ENCODE measurements at regions of chr17 and their contacts with region 1.

Region 1: DNA sequence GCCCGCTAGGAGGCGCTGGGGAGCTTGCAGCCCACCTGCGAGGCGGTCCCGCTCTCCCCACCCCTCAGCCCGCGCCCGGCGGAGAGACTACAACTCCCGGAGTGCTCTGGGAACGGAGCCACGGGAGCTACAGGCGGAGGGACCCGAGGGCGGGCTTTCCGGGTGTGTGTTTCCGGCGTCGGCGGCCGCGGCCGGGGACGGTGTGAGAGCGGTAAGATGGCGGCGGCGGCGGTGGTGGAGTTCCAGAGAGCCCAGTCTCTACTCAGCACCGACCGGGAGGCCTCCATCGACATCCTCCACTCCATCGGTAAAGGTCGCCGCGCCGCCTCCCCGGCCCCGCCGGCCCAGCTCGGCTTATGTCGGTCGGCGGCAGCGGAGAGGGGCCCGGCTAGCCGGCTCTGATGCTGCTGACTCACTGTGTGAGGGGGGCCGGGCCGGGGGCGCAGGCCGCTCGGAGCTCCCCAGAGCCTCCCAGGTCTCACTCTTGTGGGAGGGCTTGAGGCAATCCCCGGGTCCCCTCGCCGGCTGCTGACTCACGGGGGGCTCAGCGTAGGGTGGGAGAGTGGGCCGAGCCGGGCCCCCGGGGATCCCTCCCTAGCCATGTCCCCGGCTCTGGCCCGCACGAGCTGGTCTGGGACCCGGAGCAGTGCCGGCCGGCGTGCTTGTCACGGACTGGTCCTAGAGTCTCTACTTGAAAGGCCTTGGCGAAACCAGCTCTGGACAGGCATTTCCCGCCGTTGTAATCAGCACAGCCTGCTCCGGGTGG is at the start of gene PSMD11:
- DNase-seq: peak; percentile 96 to 98 (median 98)
- ATAC-seq: peak; percentile 96
- H3K4me3 ChIP-seq: peak within 1 kb of the TSS; percentile 99
- H3K27ac ChIP-seq: peak within 1 kb of the TSS; percentile 95
- H3K4me1 ChIP-seq: peaks cover 11 to 17% of the 10 kb centered on the region in 2 experiments; a peak in 4 of 5 replicates
- H3K27me3 ChIP-seq: no peaks in the 10 kb centered on the region
- CTCF ChIP-seq: peak in 2 of 3 experiments; percentile 91 to 96; a peak in 3 of 6 replicates
- EP300 ChIP-seq: 0 out of 2 replicates have a peak, but pooled peaks have one; percentile 1
- POLR2A ChIP-seq: peak; percentile 88
- RAD21 ChIP-seq: peak; percentile 22 to 50; a peak in 2 of 4 replicates
- polyA plus RNA-seq, gene PSMD11: 316 to 378 TPM

Region 2: DNA sequence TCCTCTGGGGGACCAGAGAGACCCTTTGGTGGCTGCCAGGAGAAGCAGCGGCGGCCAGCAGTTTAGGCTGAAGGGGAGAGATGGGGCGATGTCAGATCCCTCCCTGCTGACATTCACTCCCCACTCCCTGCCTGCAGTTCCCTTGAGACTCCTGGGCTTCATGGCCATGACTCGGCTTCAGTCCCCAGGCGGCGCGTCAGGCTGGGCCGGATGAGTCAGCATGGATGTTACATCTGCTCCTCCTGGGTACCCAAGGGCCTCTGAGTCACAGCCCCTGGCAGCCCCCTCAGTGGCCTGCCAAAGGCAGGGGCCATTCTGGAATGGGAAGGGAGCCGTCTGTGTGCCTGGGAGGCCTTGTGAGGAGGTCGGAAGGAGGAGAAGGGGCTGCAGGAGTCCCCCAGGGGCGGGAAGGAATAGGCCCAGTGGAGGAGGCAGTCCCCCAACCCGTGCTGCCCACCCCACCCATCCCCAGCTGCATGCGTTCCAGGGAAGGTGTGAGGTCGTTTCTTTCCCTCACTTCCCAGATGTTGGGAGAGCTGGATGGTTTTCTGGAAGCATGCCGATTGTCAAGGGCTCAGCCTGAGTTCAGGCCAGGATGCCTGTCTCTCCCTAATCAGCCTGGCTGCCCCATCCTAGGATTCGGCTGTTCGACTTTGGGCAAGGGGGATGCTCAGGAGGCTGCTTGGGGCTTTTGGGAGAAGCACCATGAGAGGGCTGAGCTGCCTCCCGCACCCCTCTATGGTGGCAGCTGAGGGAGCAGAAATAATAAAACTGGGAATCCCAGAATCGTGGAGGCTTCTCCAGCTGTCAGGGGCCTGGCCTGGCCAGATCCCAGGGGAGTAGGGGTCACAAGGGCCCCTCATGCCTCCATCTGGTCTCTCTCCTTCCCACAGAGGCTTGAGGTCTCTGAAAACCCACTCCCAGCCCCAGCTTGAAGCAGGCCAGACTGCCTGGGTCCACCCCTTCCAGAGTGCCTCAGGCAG is 169.1 kb before region 1 on chr17:
- CTCF ChIA-PET with region 1: no interaction called
- POLR2A ChIA-PET with region 1: no interaction called
- in situ Hi-C with region 1: no loop called
- intact Hi-C with region 1: no loop called
- DNase-seq: peak; percentile 83 to 89 (median 86)
- ATAC-seq: peak; percentile 87
- H3K4me3 ChIP-seq: no peak overlapping the region
- H3K27ac ChIP-seq: no peak overlapping the region
- H3K4me1 ChIP-seq: peaks cover 20 to 29% of the 10 kb centered on the region in 2 experiments; a peak in 4 of 5 replicates
- H3K27me3 ChIP-seq: peaks cover 2 to 7% of the 10 kb centered on the region in 2 experiments; a peak in 3 of 5 replicates
- CTCF ChIP-seq: peak in 1 of 3 experiments; percentile 24; a peak in 1 of 6 replicates
- EP300 ChIP-seq: no peak
- POLR2A ChIP-seq: no peak
- RAD21 ChIP-seq: no peak

Region 3: GRCh38 chr17:32341857-32342602 is 102.5 kb before region 1 on chr17 and contains the start of gene C17orf75:
- CTCF ChIA-PET with region 1: no interaction called
- POLR2A ChIA-PET with region 1: no interaction called
- in situ Hi-C with region 1: no loop called
- intact Hi-C with region 1: loop called (anchors 2 kb)
- DNase-seq: peak; percentile 76 to 90 (median 80)
- ATAC-seq: peak; percentile 93
- H3K4me3 ChIP-seq: peak within 1 kb of the TSS; percentile 55
- H3K27ac ChIP-seq: peak within 1 kb of the TSS; percentile 83
- H3K4me1 ChIP-seq: peaks cover 29 to 34% of the 10 kb centered on the region in 2 experiments
- H3K27me3 ChIP-seq: no peaks in the 10 kb centered on the region
- CTCF ChIP-seq: no peak
- EP300 ChIP-seq: peak; percentile 35; the same call in 1 of the 2 replicates
- POLR2A ChIP-seq: peak; percentile 82
- RAD21 ChIP-seq: 0 out of 4 replicates have a peak, but pooled peaks of 1 of the 2 experiments have one; percentile 5
- polyA plus RNA-seq, gene C17orf75: 49.6 to 55.7 TPM

Measured in K562 (cell line).